Heart right ventricle (tissue), 16 donors: ENCODE measurements at regions of chr1 and their contacts with region 1.

Region 1: GRCh38 chr1:31789259-31790065 is 25.3 kb upstream of the ADGRB2 start:
- DNase-seq: peak; percentile 95 to 97
- ATAC-seq: peak; percentile 86 to 95 (median 92)
- H3K4me3 ChIP-seq: peak overlapping the region; percentile 41 to 93 (median 66)
- H3K27ac ChIP-seq: peak overlapping the region in 6 of 10 donors; percentile 58 to 90 (median 82)
- H3K4me1 ChIP-seq: peaks cover 0 to 18% (median 8%) of the 10 kb centered on the region in 9 donors
- H3K27me3 ChIP-seq: peaks cover 0 to 9% (median 0%) of the 10 kb centered on the region in 7 donors
- CTCF ChIP-seq: peak; percentile 81 to 89 (median 87)

Region 2: GRCh38 chr1:31576201-31576669 is 213.2 kb before region 1 on chr1 and contains the start of gene TINAGL1:
- intact Hi-C with region 1: loop called in 1 of 10 experiments (anchors 10 kb)
- DNase-seq: peak; percentile 69 to 78
- ATAC-seq: peak; percentile 57 to 80 (median 69)
- H3K4me3 ChIP-seq: peak within 1 kb of the TSS; percentile 70 to 98 (median 91)
- H3K27ac ChIP-seq: peak within 1 kb of the TSS; percentile 89 to 99 (median 97)
- H3K4me1 ChIP-seq: peaks cover 34 to 66% (median 62%) of the 10 kb centered on the region in 9 donors
- H3K27me3 ChIP-seq: peaks cover 0 to 14% (median 0%) of the 10 kb centered on the region in 7 donors
- CTCF ChIP-seq: peak in 2 of 9 donors; percentile 4 to 11
- total RNA-seq, gene TINAGL1: 139 to 336 (median 188) TPM

Region 3: GRCh38 chr1:31669786-31670592 is 119.5 kb before region 1 on chr1:
- intact Hi-C with region 1: loop called in 4 of 10 experiments (anchors 2 to 5 kb)
- DNase-seq: peak; percentile 83
- ATAC-seq: peak; percentile 31 to 76 (median 68)
- H3K4me3 ChIP-seq: peak overlapping the region in 9 of 10 donors; percentile 6 to 53 (median 41)
- H3K27ac ChIP-seq: peak overlapping the region; percentile 13 to 87 (median 66)
- H3K4me1 ChIP-seq: peaks cover 35 to 81% (median 72%) of the 10 kb centered on the region in 9 donors
- H3K27me3 ChIP-seq: peaks cover 0 to 17% (median 0%) of the 10 kb centered on the region in 7 donors
- CTCF ChIP-seq: peak in 5 of 9 donors; percentile 7 to 42 (median 21)

Region 4: GRCh38 chr1:31762726-31763670 is 26.5 kb before region 1 on chr1:
- intact Hi-C with region 1: loop called in 2 of 10 experiments (anchors 2 kb)
- DNase-seq: peak; percentile 53 to 72
- ATAC-seq: peak; percentile 32 to 69 (median 50)
- H3K4me3 ChIP-seq: peak overlapping the region in 9 of 10 donors; percentile 42 to 69 (median 57)
- H3K27ac ChIP-seq: no peak overlapping the region
- H3K4me1 ChIP-seq: peaks cover 14 to 42% (median 32%) of the 10 kb centered on the region in 9 donors
- H3K27me3 ChIP-seq: peaks cover 0 to 76% (median 20%) of the 10 kb centered on the region in 7 donors
- CTCF ChIP-seq: peak; percentile 37 to 70 (median 62)